ENCODE measurements at regions of chr1 and their contacts with region 1.

Region 1: GRCh38 chr1:32714277-32714676 is 11.7 kb upstream of the SYNC start:
- DNase-seq: no peak
- H3K4me3 ChIP-seq: no peak overlapping the region
- H3K27ac ChIP-seq: no peak overlapping the region
- H3K4me1 ChIP-seq: no peaks in the 10 kb centered on the region
- H3K27me3 ChIP-seq: no peaks in the 10 kb centered on the region
- CTCF ChIP-seq: no peak
- EP300 ChIP-seq: no peak
- POLR2A ChIP-seq: no peak

Region 2: DNA sequence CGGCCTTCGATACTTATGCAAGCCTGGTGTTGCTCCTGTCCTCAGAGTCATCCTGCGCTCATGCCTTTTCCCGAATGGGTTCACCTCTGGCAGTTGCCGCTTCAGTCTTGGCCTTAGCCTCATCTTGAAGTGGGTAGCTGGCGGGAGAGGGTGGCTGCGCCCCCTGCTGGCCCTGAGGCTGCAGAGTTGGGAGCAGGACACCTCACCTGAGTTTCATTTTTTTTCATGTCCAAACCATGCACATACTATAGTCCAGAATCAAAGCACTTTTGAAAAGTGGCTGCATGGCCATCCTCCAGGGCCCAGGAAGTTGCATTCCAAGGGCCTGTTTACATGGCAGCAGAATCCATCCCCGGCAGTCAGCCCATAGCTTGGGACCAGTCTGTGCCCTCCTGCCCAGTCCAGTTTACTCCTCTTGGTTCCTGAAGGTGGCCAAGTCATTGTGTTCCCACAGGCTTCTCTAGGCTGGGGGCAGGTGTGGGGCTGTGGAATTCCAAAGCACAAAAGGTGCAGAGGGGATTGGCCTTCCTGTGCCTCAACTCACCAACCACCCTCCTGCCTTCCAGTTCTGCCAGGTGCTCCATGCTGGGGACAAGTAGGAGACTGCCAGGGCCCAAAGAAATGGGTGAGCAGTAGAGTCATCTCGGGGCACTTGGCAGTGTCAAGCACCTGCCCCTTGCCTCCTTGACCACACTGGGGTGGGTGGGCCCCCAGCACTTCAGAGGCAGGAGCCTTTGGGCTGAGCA is 58.9 kb after region 1 on chr1:
- intact Hi-C with region 1: loop called (anchors 2 to 5 kb)
- DNase-seq: peak; percentile 81 to 90 (median 87)
- H3K4me3 ChIP-seq: no peak overlapping the region
- H3K27ac ChIP-seq: peak overlapping the region in 1 of 2 donors; percentile 8
- H3K4me1 ChIP-seq: peaks cover 9% of the 10 kb centered on the region
- H3K27me3 ChIP-seq: no peaks in the 10 kb centered on the region
- CTCF ChIP-seq: peak; percentile 79 to 92 (median 91)
- EP300 ChIP-seq: no peak
- POLR2A ChIP-seq: no peak

Region 3: GRCh38 chr1:32870615-32871363 is 156.5 kb after region 1 on chr1 and contains the start of gene FNDC5:
- intact Hi-C with region 1: loop called in 1 of 4 experiments (anchors 5 kb)
- DNase-seq: peak; percentile 51 to 79 (median 56)
- H3K4me3 ChIP-seq: peak within 1 kb of the TSS; percentile 37
- H3K27ac ChIP-seq: peak within 1 kb of the TSS in 1 of 2 donors; percentile 5
- H3K4me1 ChIP-seq: peaks cover 4% of the 10 kb centered on the region
- H3K27me3 ChIP-seq: no peaks in the 10 kb centered on the region
- CTCF ChIP-seq: no peak
- EP300 ChIP-seq: no peak
- POLR2A ChIP-seq: no peak
- total RNA-seq, gene FNDC5: 4.2 to 25.4 (median 12.1) TPM

Region 4: DNA sequence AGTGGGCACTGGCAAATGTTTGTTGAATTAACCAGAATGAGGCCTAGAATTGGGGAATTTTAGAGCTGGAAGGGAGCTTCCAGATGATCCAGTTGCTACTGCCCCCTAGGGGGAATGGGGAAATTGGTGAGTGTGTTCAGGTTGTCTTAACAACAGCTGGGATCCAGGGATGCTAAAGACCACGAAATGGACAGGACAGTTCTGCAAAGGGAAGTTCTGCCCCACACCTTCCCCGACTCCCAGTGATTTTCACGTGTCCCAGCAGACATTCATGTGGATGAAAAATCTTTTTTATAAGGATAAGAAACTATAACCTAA is 433.7 kb after region 1 on chr1:
- intact Hi-C with region 1: no loop called
- DNase-seq: no peak
- H3K4me3 ChIP-seq: no peak overlapping the region
- H3K27ac ChIP-seq: no peak overlapping the region
- H3K4me1 ChIP-seq: no peaks in the 10 kb centered on the region
- H3K27me3 ChIP-seq: no peaks in the 10 kb centered on the region
- CTCF ChIP-seq: no peak
- EP300 ChIP-seq: no peak
- POLR2A ChIP-seq: no peak